ENCODE measurements at regions of chr1 and their contacts with region 1.

Region 1: GRCh38 chr1:1033009-1033587 is 13.2 kb downstream of the AGRN start:
- DNase-seq: peak; percentile 72 to 93 (median 85)
- ATAC-seq: peak; percentile 94
- H3K4me3 ChIP-seq: peak overlapping the region; percentile 23 to 24
- H3K4me3 Mint-ChIP-seq: peak overlapping the region; percentile 74
- H3K27ac ChIP-seq: no peak overlapping the region
- H3K27ac Mint-ChIP-seq: no peak overlapping the region
- H3K4me1 ChIP-seq: peaks cover 13% of the 10 kb centered on the region
- H3K4me1 Mint-ChIP-seq: peaks cover 7% of the 10 kb centered on the region
- H3K27me3 ChIP-seq: peaks cover 0 to 27% of the 10 kb centered on the region in 2 experiments
- H3K27me3 Mint-ChIP-seq: peaks cover 20% of the 10 kb centered on the region
- CTCF ChIP-seq: peak; percentile 95

Region 2: DNA sequence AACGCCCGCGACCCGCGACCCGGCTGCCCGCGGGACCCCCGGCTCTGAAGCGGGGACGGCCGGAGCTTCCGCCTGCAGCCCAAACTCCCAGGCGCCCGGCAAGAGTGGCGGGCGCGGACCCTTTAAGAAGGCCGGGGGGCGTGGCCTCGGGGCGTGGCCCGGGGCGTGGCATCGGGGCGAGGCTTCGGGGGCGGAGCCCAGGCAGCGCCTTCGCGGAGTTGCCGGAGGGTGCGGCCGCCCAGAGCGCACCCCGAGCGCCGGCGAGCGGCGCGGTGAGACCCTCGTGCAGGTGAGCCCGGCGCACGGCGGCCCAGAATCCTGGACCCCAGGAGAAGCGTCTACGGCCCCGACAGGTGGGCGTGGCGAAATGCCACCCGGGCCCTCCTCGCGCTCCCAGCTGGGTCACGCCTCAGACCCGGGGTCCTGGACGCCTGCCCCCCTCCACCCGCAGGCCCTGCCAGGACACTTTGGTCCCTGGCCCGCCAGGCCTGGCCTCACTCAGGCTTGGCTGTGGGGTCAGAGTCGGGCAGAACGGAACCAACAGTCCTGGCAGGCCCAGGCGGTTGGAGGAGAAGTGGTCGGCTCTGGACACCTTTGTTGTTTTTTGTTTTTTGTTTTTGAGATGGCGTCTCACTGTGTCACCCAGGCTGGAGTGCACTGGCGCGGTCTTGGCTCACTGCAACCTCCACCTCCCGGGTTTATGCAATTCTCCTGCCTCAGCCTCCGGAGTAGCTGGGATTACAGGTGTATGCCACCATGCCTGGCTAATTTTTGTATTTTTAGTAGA is 26.6 kb after region 1 on chr1:
- CTCF ChIA-PET with region 1: interaction called, 25 read pairs
- POLR2A ChIA-PET with region 1: no interaction called
- intact Hi-C with region 1: loop called (anchors 1 kb)
- DNase-seq: peak; percentile 86 to 96 (median 90)
- ATAC-seq: peak; percentile 67
- H3K4me3 ChIP-seq: peak overlapping the region; percentile 19 to 66
- H3K4me3 Mint-ChIP-seq: peak overlapping the region; percentile 51
- H3K27ac ChIP-seq: no peak overlapping the region
- H3K27ac Mint-ChIP-seq: no peak overlapping the region
- H3K4me1 ChIP-seq: peaks cover 45% of the 10 kb centered on the region
- H3K4me1 Mint-ChIP-seq: peaks cover 13% of the 10 kb centered on the region
- H3K27me3 ChIP-seq: peaks cover 0 to 38% of the 10 kb centered on the region in 2 experiments
- H3K27me3 Mint-ChIP-seq: peaks cover 17% of the 10 kb centered on the region
- CTCF ChIP-seq: no peak

Region 3: GRCh38 chr1:1291548-1292441 is 258.7 kb after region 1 on chr1:
- CTCF ChIA-PET with region 1: interaction called, 4 read pairs
- POLR2A ChIA-PET with region 1: no interaction called
- intact Hi-C with region 1: loop called in 1 of 2 experiments (anchors 2 kb)
- DNase-seq: peak in 8 of 9 experiments; percentile 55 to 82 (median 74)
- ATAC-seq: peak; percentile 87
- H3K4me3 ChIP-seq: no peak overlapping the region
- H3K4me3 Mint-ChIP-seq: no peak overlapping the region
- H3K27ac ChIP-seq: no peak overlapping the region
- H3K27ac Mint-ChIP-seq: no peak overlapping the region
- H3K4me1 ChIP-seq: peaks cover 4% of the 10 kb centered on the region
- H3K4me1 Mint-ChIP-seq: peaks cover 3% of the 10 kb centered on the region
- H3K27me3 ChIP-seq: no peaks in the 10 kb centered on the region
- H3K27me3 Mint-ChIP-seq: no peaks in the 10 kb centered on the region
- CTCF ChIP-seq: peak; percentile 58

Region 4: DNA sequence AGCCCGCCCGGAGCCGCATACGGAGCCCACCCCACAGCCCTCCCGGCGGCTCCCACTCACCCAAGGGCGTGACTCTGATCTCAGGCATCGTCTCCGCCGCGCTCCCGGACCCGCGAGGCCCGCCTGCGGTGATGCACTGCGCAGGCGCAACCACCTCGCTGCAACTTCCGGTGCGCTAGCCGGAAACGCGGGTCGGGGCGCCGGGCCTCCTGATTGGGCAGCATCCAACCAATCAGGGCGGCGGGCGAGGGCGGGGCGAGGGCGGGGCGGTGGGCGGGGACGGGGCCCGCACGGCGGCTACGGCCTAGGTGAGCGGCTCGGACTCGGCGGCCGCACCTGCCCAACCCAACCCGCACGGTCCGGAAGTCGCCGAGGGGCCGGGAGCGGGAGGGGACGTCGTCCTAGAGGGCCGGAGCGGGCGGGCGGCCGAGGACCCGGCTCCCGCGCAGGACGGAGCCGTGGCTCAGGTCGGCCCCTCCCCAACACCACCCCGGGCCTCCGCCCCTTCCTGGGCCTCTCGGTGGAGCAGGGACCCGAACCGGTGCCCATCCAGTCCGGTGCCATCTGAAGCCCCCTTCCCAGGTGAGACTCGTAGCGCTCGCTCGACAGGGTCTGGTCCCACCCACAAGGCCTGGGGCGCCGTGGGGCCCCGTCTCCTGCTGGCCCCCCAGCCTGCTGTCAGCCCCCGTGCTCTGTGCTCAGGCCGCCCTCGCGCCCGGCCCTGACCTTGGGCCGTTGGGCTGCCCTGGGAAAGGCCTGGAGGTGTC is 291.6 kb after region 1 on chr1 and contains the starts of genes CPTP and INTS11:
- CTCF ChIA-PET with region 1: no interaction called
- POLR2A ChIA-PET with region 1: no interaction called
- intact Hi-C with region 1: loop called in 1 of 2 experiments (anchors 1 kb)
- DNase-seq: peak; percentile 89 to 98 (median 96)
- ATAC-seq: peak; percentile 86
- H3K4me3 ChIP-seq: peak within 1 kb of the TSS; percentile 60 to 77
- H3K4me3 Mint-ChIP-seq: peak within 1 kb of the TSS; percentile 89
- H3K27ac ChIP-seq: peak within 1 kb of the TSS; percentile 73
- H3K27ac Mint-ChIP-seq: peak within 1 kb of the TSS; percentile 89
- H3K4me1 ChIP-seq: peaks cover 35% of the 10 kb centered on the region
- H3K4me1 Mint-ChIP-seq: peaks cover 35% of the 10 kb centered on the region
- H3K27me3 ChIP-seq: no peaks in the 10 kb centered on the region
- H3K27me3 Mint-ChIP-seq: no peaks in the 10 kb centered on the region
- CTCF ChIP-seq: no peak
- total RNA-seq, gene CPTP: 7.3 to 7.9 TPM
- total RNA-seq, gene INTS11: 139 to 156 TPM

Region 5: DNA sequence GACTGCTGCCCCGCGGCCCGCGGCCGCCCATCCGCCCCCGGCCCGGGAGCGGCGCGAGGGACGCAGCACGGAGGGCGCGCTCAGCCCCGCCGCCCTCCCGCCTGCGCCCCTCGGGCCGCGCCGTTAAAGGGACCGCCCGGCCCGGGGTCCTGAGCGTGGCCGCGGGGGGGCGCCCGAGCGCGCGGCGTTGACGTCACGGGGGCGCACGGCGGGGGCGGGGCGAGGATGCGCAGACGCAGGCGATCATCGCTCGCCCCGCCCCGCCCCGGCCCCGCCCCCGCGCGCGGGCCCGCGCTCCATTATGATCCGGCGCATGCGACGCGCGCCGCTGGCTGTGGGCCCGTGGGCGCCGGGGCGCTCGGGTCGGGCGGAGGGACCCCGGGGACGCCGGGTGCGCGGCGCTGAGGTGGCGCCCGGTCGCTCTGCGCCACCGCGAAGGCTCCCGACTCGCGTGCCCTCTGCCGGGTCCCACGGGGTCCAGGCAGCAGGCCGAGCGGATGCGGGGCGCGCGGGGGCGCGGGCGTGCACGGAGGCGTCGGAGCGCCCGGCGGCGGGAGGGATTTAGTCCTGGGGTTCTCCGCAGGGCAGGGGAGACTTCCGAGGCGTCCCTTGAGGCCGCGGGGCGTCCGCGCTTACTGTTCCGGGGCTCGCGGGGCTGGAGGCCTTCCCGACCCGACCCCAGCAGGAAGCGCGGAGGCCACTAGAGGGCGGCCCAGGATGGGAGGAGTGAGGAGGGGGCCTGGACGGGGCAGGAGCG is 316.3 kb after region 1 on chr1 and contains the start of gene DVL1:
- CTCF ChIA-PET with region 1: no interaction called
- POLR2A ChIA-PET with region 1: no interaction called
- intact Hi-C with region 1: loop called in 1 of 2 experiments (anchors 1 kb)
- DNase-seq: peak; percentile 50 to 86 (median 72)
- ATAC-seq: peak; percentile 84
- H3K4me3 ChIP-seq: peak within 1 kb of the TSS; percentile 57 to 63
- H3K4me3 Mint-ChIP-seq: peak within 1 kb of the TSS; percentile 76
- H3K27ac ChIP-seq: peak within 1 kb of the TSS; percentile 46 to 72
- H3K27ac Mint-ChIP-seq: peak within 1 kb of the TSS; percentile 41
- H3K4me1 ChIP-seq: peaks cover 27% of the 10 kb centered on the region
- H3K4me1 Mint-ChIP-seq: peaks cover 29% of the 10 kb centered on the region
- H3K27me3 ChIP-seq: peaks cover 0 to 16% of the 10 kb centered on the region in 2 experiments
- H3K27me3 Mint-ChIP-seq: peaks cover 8% of the 10 kb centered on the region
- CTCF ChIP-seq: peak; percentile 43
- total RNA-seq, gene DVL1: 44.5 to 45.5 TPM

Region 6: GRCh38 chr1:1441002-1441888 is 408.1 kb after region 1 on chr1:
- CTCF ChIA-PET with region 1: no interaction called
- POLR2A ChIA-PET with region 1: no interaction called
- intact Hi-C with region 1: loop called in 1 of 2 experiments (anchors 1 kb)
- DNase-seq: peak; percentile 22 to 74 (median 59)
- ATAC-seq: peak; percentile 94
- H3K4me3 ChIP-seq: no peak overlapping the region
- H3K4me3 Mint-ChIP-seq: no peak overlapping the region
- H3K27ac ChIP-seq: no peak overlapping the region
- H3K27ac Mint-ChIP-seq: no peak overlapping the region
- H3K4me1 ChIP-seq: peaks cover 9% of the 10 kb centered on the region
- H3K4me1 Mint-ChIP-seq: peaks cover 5% of the 10 kb centered on the region
- H3K27me3 ChIP-seq: peaks cover 12 to 16% of the 10 kb centered on the region in 2 experiments
- H3K27me3 Mint-ChIP-seq: peaks cover 10% of the 10 kb centered on the region
- CTCF ChIP-seq: peak; percentile 85